ENCODE measurements at regions of chr14 and their contacts with region 1.

Region 1: DNA sequence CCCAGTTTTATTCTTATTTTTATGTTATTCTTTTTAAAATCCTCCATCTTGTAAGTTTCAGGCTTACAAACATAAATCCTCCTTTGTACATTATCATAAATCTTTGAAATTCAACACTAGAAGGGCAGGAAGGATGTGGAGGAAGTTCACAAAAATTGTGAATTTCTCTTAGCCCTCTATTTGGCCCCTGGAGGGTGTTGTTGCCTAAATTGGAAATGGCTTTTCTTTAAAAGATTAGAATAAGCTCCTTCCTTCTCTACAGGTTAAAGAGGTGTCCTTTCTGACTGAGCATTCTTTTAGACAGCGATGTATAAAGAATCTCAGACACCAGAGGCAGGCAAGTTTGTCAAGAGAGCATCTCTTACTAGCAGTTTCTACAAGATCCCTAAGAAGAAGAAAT is 391.7 kb upstream of the OR4E1 start:
- DNase-seq: peak in 2 of 10 donors; percentile 27 to 36
- ATAC-seq: peak; percentile 41 to 50
- H3K4me3 Mint-ChIP-seq: peak overlapping the region in 9 of 10 donors; percentile 25 to 60 (median 43)
- H3K27ac Mint-ChIP-seq: peak overlapping the region in 8 of 10 donors; percentile 10 to 73 (median 50)
- H3K4me1 Mint-ChIP-seq: peaks cover 4 to 38% (median 31%) of the 10 kb centered on the region in 4 donors
- H3K27me3 Mint-ChIP-seq: peaks cover 0 to 15% (median 0%) of the 10 kb centered on the region in 5 donors

Region 2: DNA sequence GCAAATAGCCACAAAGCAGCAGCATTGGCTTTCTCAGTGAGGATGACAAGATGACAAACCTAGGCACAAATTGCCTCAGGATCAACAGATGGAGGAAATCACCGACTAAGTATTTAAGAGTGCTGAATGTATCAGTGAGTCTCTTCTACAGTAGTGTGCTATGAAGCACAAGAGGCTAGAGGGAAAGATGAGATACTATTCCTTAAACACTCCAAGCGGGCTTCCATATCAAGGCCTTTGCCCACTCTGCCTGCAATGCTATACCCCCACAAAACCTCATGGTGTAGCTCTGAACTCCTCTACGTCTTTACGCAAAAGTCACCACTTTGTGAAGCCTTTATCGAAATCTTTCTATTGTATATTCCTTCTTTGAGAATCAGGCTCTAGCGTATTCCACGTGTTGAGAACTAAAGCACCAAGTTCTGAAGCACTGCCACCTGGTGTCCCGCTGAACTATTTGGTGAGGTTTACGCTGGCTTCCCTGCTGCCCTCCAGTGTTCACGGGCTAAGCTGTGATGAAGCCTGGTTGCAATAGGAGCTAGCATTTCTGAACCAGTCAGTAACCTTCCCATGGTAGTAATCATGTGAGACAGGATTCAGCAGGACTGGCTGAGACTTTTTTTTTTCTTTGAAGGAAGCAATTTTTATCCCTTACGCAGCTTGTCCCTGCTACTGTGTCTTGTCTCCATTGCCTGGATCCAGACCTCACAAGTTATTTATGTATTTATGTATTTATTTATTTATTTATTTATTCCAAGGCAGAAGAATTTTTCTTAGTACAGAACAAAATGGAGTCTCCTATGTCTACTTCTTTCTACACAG is 34.8 kb after region 1 on chr14:
- POLR2A ChIA-PET with region 1: interaction called, 12 read pairs
- DNase-seq: peak; percentile 10 to 78 (median 56)
- ATAC-seq: peak; percentile 70 to 74
- H3K4me3 Mint-ChIP-seq: peak overlapping the region in 3 of 10 donors; percentile 2 to 52 (median 43)
- H3K27ac Mint-ChIP-seq: peak overlapping the region in 2 of 10 donors; percentile 8 to 56
- H3K4me1 Mint-ChIP-seq: peaks cover 4 to 52% (median 50%) of the 10 kb centered on the region in 4 donors
- H3K27me3 Mint-ChIP-seq: peaks cover 0 to 3% (median 0%) of the 10 kb centered on the region in 5 donors